Ovary (tissue), 10 donors: ENCODE measurements at regions of chr10 and their contacts with region 1.

Region 1: GRCh38 chr10:84632866-84633265 is 304.5 kb downstream of the CCSER2 start:
- DNase-seq: no peak
- H3K4me3 ChIP-seq: no peak overlapping the region
- H3K27ac ChIP-seq: no peak overlapping the region
- H3K4me1 ChIP-seq: no peaks in the 10 kb centered on the region
- H3K27me3 ChIP-seq: no peaks in the 10 kb centered on the region
- CTCF ChIP-seq: no peak
- EP300 ChIP-seq: no peak
- POLR2A ChIP-seq: no peak

Region 2: GRCh38 chr10:84654671-84655070 is 21.8 kb after region 1 on chr10:
- intact Hi-C with region 1: loop called in 1 of 4 experiments (anchors 2 kb)
- DNase-seq: no peak
- H3K4me3 ChIP-seq: no peak overlapping the region
- H3K27ac ChIP-seq: no peak overlapping the region
- H3K4me1 ChIP-seq: no peaks in the 10 kb centered on the region
- H3K27me3 ChIP-seq: no peaks in the 10 kb centered on the region
- CTCF ChIP-seq: no peak
- EP300 ChIP-seq: no peak
- POLR2A ChIP-seq: no peak